Sigmoid colon (tissue), 7 donors: ENCODE measurements at regions of chr17 and their contacts with region 1.

Region 1: GRCh38 chr17:50865984-50866774 is at the start of gene TOB1:
- DNase-seq: peak; percentile 99
- H3K4me3 ChIP-seq: peak within 1 kb of the TSS; percentile 80 to 100 (median 96)
- H3K27ac ChIP-seq: peak within 1 kb of the TSS; percentile 99 to 100 (median 99)
- H3K4me1 ChIP-seq: peaks cover 0 to 47% (median 36%) of the 10 kb centered on the region in 4 donors
- H3K27me3 ChIP-seq: no peaks in the 10 kb centered on the region
- CTCF ChIP-seq: no peak
- EP300 ChIP-seq: peak in 2 of 4 donors; percentile 49 to 59
- POLR2A ChIP-seq: peak; percentile 95 to 97
- total RNA-seq, gene TOB1: 16.2 to 31.1 (median 30.1) TPM

Region 2: GRCh38 chr17:50904521-50905459 is 38.6 kb after region 1 on chr17:
- intact Hi-C with region 1: loop called (anchors 1 kb)
- DNase-seq: peak; percentile 91
- H3K4me3 ChIP-seq: no peak overlapping the region
- H3K27ac ChIP-seq: peak overlapping the region; percentile 81 to 98 (median 95)
- H3K4me1 ChIP-seq: peaks cover 4 to 44% (median 41%) of the 10 kb centered on the region in 4 donors
- H3K27me3 ChIP-seq: no peaks in the 10 kb centered on the region
- CTCF ChIP-seq: no peak
- EP300 ChIP-seq: no peak
- POLR2A ChIP-seq: no peak

Region 3: DNA sequence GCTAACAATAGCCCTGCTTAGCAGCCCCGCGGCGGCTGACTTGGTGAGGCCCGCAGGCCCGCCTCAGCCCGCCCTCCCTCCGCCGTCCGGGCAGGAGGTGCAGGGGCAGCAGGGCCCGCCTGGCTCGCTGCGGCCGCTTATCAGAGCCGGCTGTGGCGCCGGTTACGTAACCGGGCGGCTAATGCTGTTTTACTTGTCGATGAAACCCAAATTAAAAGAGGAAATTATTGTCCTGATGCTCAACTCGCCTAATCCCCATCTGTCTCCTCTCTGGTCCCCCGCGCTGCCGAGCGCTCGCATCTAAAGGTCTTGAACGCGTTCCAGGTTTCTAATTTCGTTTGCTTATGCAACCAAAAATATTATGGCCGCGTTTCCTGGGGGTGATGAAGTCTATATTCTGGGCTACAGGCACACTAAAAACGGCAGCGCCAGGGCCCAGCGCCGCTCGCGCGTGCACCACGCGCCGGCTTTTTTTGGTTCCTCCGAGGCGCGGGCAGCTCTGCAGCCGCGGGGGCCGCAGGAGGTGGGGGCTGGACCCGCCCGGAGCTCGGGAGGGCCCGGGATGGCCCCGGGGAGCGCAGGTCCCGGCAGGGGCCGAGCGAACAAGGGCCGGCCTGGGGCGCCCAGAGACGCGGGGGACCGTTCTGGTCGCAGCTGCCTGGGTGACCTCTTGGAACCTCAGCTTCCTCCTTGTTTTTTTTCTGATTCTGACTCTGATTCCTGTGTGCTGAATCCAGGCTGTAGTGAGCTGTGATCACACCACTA is 65.1 kb after region 1 on chr17:
- intact Hi-C with region 1: loop called (anchors 1 kb)
- DNase-seq: peak; percentile 96
- H3K4me3 ChIP-seq: peak overlapping the region; percentile 29 to 52 (median 47)
- H3K27ac ChIP-seq: peak overlapping the region; percentile 92 to 98 (median 96)
- H3K4me1 ChIP-seq: peaks cover 0 to 37% (median 32%) of the 10 kb centered on the region in 4 donors
- H3K27me3 ChIP-seq: no peaks in the 10 kb centered on the region
- CTCF ChIP-seq: no peak
- EP300 ChIP-seq: peak in 1 of 4 donors; percentile 56
- POLR2A ChIP-seq: peak; percentile 24 to 35

Region 4: GRCh38 chr17:50949989-50950881 is 84.1 kb after region 1 on chr17:
- intact Hi-C with region 1: loop called (anchors 2 kb)
- DNase-seq: peak; percentile 91
- H3K4me3 ChIP-seq: peak overlapping the region in 1 of 4 donors; percentile 14
- H3K27ac ChIP-seq: peak overlapping the region; percentile 82 to 92 (median 84)
- H3K4me1 ChIP-seq: peaks cover 0 to 51% (median 41%) of the 10 kb centered on the region in 4 donors
- H3K27me3 ChIP-seq: no peaks in the 10 kb centered on the region
- CTCF ChIP-seq: peak; percentile 76 to 95 (median 94)
- EP300 ChIP-seq: peak in 2 of 4 donors; percentile 60 to 85
- POLR2A ChIP-seq: peak in 1 of 2 donors; percentile 31

Region 5: GRCh38 chr17:51120739-51121617 is 254.8 kb after region 1 on chr17 and contains the start of gene SPAG9:
- intact Hi-C with region 1: loop called (anchors 2 kb)
- DNase-seq: peak; percentile 98
- H3K4me3 ChIP-seq: peak within 1 kb of the TSS; percentile 91 to 99 (median 98)
- H3K27ac ChIP-seq: peak within 1 kb of the TSS; percentile 98 to 100 (median 100)
- H3K4me1 ChIP-seq: peaks cover 0 to 43% (median 29%) of the 10 kb centered on the region in 4 donors
- H3K27me3 ChIP-seq: no peaks in the 10 kb centered on the region
- CTCF ChIP-seq: no peak
- EP300 ChIP-seq: peak in 2 of 4 donors; percentile 51 to 52
- POLR2A ChIP-seq: peak; percentile 83 to 85
- total RNA-seq, gene SPAG9: 74.3 to 79.9 (median 77.0) TPM